ENCODE measurements at regions of chr10 and their contacts with region 1.

Region 1: GRCh38 chr10:117503244-117504205 is 39.0 kb upstream of the EMX2 start:
- DNase-seq: peak in 1 of 2 donors; percentile 83
- H3K4me3 ChIP-seq: no peak overlapping the region
- CTCF ChIP-seq: no peak
- POLR2A ChIP-seq: no peak

Region 2: DNA sequence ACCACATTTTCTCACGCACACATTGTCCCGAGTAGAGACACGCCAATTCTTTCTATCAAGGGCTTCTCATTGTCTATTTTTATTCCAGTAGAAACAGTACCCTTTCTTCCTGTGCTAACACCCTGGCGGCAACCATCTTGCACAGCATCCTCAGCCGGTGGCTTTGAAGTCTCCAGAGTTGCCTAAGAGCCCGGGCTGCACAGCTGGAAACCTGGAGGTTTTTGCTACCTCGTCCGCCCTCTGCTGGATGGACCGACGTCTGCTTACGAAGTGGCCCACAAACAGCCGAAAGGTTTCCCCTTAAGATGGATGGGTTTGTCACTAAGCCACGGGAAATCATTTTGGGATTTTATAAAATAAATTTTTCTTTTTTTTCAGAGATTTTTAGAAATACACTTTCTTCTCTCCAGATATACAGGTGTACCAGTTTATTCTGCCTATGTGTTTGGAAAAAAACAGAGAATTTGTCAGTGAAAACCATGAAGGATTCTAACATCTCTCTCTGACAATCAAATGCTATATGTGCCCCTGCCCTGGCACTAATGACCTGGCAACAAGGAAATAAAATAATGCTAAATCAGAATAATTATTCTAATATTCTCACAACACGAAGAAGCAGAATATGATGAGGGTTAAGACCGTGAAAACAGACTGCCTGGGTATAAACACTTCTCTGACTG is 920.4 kb after region 1 on chr10:
- intact Hi-C with region 1: loop called (anchors 10 kb)
- DNase-seq: peak; percentile 79 to 94
- H3K4me3 ChIP-seq: no peak overlapping the region
- CTCF ChIP-seq: no peak
- POLR2A ChIP-seq: no peak

Measured in lower leg skin (tissue), 4 donors.